WTC11 (cell line): ENCODE measurements at regions of chr17 and their contacts with region 1.

Region 1: DNA sequence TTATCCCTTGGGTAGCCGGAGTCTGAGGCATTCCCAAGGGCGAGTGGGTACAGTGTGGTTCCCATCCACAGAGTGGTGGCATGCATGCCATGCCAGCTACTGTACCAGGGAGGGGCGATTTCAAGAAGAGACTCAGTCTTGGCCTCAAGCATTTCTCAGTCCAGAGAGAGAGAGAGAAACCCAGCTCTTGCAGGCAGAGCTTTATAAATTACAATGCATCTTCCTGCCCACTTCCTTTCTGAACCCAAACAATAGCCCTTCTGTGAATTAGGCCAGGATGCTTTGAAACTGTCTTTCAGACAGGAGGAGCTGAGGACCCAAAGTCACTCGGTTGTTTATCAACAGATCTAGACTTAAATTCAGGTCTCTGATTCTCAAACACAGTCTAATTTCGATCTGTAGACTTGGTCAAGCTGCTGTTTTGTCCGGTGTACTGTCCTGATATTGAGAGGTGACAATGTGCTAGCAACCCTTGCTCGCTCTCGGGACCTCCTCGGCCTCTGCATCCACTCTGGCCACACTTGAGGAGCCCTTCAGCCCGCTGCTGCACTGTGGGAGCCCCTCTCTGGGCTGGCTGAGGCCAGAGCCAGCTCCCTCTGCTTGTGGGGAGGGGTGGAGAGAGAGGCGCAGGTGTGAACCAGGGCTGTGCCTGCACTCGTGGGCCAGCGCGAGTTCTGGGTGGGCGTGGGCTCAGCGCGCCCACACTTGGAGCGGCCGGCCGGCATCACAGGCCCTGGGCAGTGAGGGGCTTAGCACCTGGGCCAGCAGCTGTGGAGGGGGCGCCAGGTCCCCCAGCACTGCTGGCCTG is 408.0 kb downstream of the UTP18 start:
- DNase-seq: no peak
- ATAC-seq: no peak
- H3K4me3 Mint-ChIP-seq: no peak overlapping the region
- H3K27ac Mint-ChIP-seq: no peak overlapping the region
- H3K4me1 Mint-ChIP-seq: no peaks in the 10 kb centered on the region
- H3K27me3 Mint-ChIP-seq: peaks cover 12% of the 10 kb centered on the region
- CTCF ChIP-seq: no peak

Region 2: GRCh38 chr17:51391982-51392654 is 276.2 kb before region 1 on chr17:
- CTCF ChIA-PET with region 1: no interaction called
- POLR2A ChIA-PET with region 1: no interaction called
- DNase-seq: no peak
- ATAC-seq: no peak
- H3K4me3 Mint-ChIP-seq: no peak overlapping the region
- H3K27ac Mint-ChIP-seq: no peak overlapping the region
- H3K4me1 Mint-ChIP-seq: no peaks in the 10 kb centered on the region
- H3K27me3 Mint-ChIP-seq: no peaks in the 10 kb centered on the region; the same call in 1 of the 2 replicates
- CTCF ChIP-seq: no peak

Region 3: GRCh38 chr17:53353919-53354351 is 1685.6 kb after region 1 on chr17:
- CTCF ChIA-PET with region 1: no interaction called
- POLR2A ChIA-PET with region 1: interaction called, 11 read pairs
- DNase-seq: no peak
- ATAC-seq: peak; percentile 22; the same call in 1 of the 2 replicates
- H3K4me3 Mint-ChIP-seq: no peak overlapping the region
- H3K27ac Mint-ChIP-seq: no peak overlapping the region
- H3K4me1 Mint-ChIP-seq: peaks cover 15% of the 10 kb centered on the region
- H3K27me3 Mint-ChIP-seq: no peaks in the 10 kb centered on the region; the same call in 1 of the 2 replicates
- CTCF ChIP-seq: no peak